Motor neuron (in vitro differentiated cells): ENCODE measurements at regions of chr7 and their contacts with region 1.

Region 1: GRCh38 chr7:43834463-43835251 is 34.7 kb downstream of the MRPS24 start:
- ATAC-seq: peak in 2 of 8 experiments; percentile 12 to 45
- H3K4me3 ChIP-seq: no peak overlapping the region
- H3K27ac ChIP-seq: no peak overlapping the region
- H3K4me1 ChIP-seq: peaks cover 0 to 2% of the 10 kb centered on the region in 2 donors

Region 2: GRCh38 chr7:41940760-41941343 is 1893.8 kb before region 1 on chr7:
- in situ Hi-C with region 1: loop called in 1 of 9 experiments (anchors 25 kb)
- ATAC-seq: peak; percentile 79 to 89 (median 82)
- H3K4me3 ChIP-seq: no peak overlapping the region
- H3K27ac ChIP-seq: no peak overlapping the region
- H3K4me1 ChIP-seq: no peaks in the 10 kb centered on the region

Region 3: GRCh38 chr7:43582503-43583423 is 251.9 kb before region 1 on chr7 and contains the start of gene STK17A:
- in situ Hi-C with region 1: loop called in 4 of 9 experiments (anchors 25 kb)
- ATAC-seq: peak; percentile 80 to 92 (median 88)
- H3K4me3 ChIP-seq: peak within 1 kb of the TSS; percentile 48 to 82 (median 73)
- H3K27ac ChIP-seq: peak within 1 kb of the TSS in 1 of 2 donors; percentile 6
- H3K4me1 ChIP-seq: peaks cover 6% of the 10 kb centered on the region in 2 donors
- total RNA-seq, gene STK17A: 3.9 to 18.4 (median 13.4) TPM

Region 4: GRCh38 chr7:43729214-43729923 is 105.3 kb before region 1 on chr7 and contains the start of gene COA1:
- in situ Hi-C with region 1: loop called in 1 of 9 experiments (anchors 10 kb)
- ATAC-seq: peak; percentile 96 to 99 (median 98)
- H3K4me3 ChIP-seq: peak within 1 kb of the TSS; percentile 58 to 94 (median 82)
- H3K27ac ChIP-seq: peak within 1 kb of the TSS; percentile 78 to 82
- H3K4me1 ChIP-seq: peaks cover 2 to 17% of the 10 kb centered on the region in 2 donors
- total RNA-seq, gene COA1: 46.0 to 93.2 (median 76.1) TPM